ENCODE measurements at regions of chr20 and their contacts with region 1.

Region 1: DNA sequence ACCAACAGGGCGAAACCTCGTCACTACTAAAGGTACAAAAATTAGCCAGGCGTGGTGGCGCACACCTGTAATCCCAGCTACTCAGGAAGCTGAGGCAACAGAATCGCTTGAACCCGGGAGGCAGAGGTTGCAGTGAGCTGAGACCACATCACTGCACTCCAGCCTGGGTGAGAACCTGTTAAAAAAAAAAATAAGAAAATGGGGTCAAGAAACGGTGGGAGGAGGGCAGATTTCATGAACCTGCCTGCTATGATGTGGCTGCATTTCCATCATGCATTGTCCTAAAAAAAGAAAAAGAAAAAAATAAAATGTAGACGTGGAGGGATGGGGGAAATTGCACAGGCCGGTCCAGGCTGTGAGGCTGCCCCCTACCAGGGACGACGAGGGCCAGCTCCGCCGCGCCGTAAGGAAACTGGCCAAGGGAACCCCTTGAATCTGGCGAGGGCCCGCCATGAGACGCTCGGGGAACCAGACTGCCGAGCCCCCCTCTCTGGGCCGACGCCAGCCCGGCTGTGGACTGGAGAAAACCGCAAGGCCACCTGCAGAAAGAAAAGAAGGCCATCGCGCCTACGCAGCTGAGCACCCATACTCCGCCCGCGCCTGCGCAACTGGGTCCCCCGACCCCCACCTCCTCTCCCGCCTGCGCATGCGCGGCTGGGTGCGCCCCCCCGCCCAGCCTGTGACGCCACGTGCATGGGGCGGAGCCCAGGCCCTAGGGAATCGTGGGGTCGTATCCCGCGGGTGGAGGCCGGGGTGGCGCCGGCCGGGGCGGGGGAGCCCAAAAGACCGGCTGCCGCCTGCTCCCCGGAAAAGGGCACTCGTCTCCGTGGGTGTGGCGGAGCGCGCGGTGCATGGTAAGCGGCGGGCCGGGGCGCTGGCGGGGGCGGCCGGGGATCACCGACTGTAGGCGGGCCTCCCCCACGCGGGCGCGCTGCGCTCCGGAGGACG is at the start of gene ENTPD6:
- DNase-seq: peak; percentile 89 to 98 (median 93)
- H3K4me3 ChIP-seq: peak within 1 kb of the TSS; percentile 82 to 85
- H3K4me3 Mint-ChIP-seq: peak within 1 kb of the TSS; percentile 85 to 95 (median 90)
- H3K27ac ChIP-seq: peak within 1 kb of the TSS; percentile 77
- H3K27ac Mint-ChIP-seq: peak within 1 kb of the TSS; percentile 84 to 95 (median 93)
- H3K4me1 ChIP-seq: peaks cover 28% of the 10 kb centered on the region
- H3K4me1 Mint-ChIP-seq: peaks cover 33 to 46% (median 38%) of the 10 kb centered on the region in 4 donors
- H3K27me3 ChIP-seq: no peaks in the 10 kb centered on the region
- H3K27me3 Mint-ChIP-seq: no peaks in the 10 kb centered on the region
- total RNA-seq, gene ENTPD6: 90.2 to 94.3 TPM

Region 2: GRCh38 chr20:23420943-23421931 is 1774.1 kb before region 1 on chr20 and contains the start of gene NAPB:
- CTCF ChIA-PET with region 1: no interaction called
- POLR2A ChIA-PET with region 1: no interaction called
- intact Hi-C with region 1: loop called (anchors 5 kb)
- DNase-seq: peak; percentile 90 to 92 (median 91)
- H3K4me3 ChIP-seq: peak within 1 kb of the TSS; percentile 73 to 84
- H3K4me3 Mint-ChIP-seq: peak within 1 kb of the TSS; percentile 83 to 91 (median 87)
- H3K27ac ChIP-seq: peak within 1 kb of the TSS; percentile 72
- H3K27ac Mint-ChIP-seq: peak within 1 kb of the TSS; percentile 84 to 91 (median 89)
- H3K4me1 ChIP-seq: peaks cover 21% of the 10 kb centered on the region
- H3K4me1 Mint-ChIP-seq: peaks cover 16 to 32% (median 26%) of the 10 kb centered on the region in 4 donors
- H3K27me3 ChIP-seq: no peaks in the 10 kb centered on the region
- H3K27me3 Mint-ChIP-seq: peaks cover 5 to 10% of the 10 kb centered on the region in 2 donors
- total RNA-seq, gene NAPB: 13.3 to 14.9 TPM

Region 3: GRCh38 chr20:24027229-24027628 is 1168.1 kb before region 1 on chr20:
- CTCF ChIA-PET with region 1: no interaction called
- POLR2A ChIA-PET with region 1: interaction called, 5 read pairs
- intact Hi-C with region 1: loop called (anchors 5 kb)
- DNase-seq: peak; percentile 79 to 85 (median 83)
- H3K4me3 ChIP-seq: peak overlapping the region in 1 of 2 donors; percentile 34
- H3K4me3 Mint-ChIP-seq: peak overlapping the region; percentile 61 to 85 (median 68)
- H3K27ac ChIP-seq: peak overlapping the region; percentile 45
- H3K27ac Mint-ChIP-seq: peak overlapping the region; percentile 88 to 96 (median 95)
- H3K4me1 ChIP-seq: peaks cover 34% of the 10 kb centered on the region
- H3K4me1 Mint-ChIP-seq: peaks cover 20 to 53% (median 31%) of the 10 kb centered on the region in 4 donors
- H3K27me3 ChIP-seq: no peaks in the 10 kb centered on the region
- H3K27me3 Mint-ChIP-seq: no peaks in the 10 kb centered on the region

Region 4: DNA sequence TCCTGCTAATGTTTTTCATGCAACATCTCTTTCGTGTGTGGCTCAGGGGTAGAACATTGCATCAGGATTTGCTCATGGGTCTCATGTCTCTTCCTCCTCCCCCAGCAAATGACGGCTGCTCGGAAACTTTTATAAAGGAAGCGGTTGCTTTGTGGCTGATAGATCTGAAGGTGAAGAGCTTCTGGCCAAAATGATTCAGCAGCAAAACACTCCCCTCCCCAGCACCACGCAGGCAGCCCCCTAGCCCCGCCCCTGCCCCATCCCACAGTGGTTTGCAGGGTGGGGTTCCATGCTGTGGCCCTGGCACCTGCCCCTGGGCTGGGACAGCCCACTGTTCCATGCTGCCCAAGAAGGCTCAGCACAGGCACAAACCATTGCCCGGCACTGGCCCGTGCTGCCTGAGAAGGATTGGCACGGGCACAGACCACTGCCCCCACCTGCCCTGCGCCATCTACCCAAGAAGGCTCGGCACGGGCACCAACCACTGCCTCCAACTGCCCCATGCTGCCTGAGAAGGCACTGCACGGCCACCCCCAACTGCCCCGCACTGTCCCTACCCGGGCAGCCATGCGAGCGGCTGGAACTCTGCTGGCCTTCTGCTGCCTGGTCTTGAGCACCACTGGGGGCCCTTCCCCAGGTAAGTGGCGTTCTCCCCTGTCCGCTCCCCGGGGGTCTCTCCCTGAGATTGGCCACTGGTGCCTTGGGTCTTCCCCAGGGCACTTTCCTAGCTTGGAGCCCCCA is 246.2 kb before region 1 on chr20 and contains the start of gene CST7:
- CTCF ChIA-PET with region 1: no interaction called
- POLR2A ChIA-PET with region 1: interaction called, 3 read pairs
- intact Hi-C with region 1: loop called (anchors 1 kb)
- DNase-seq: peak; percentile 85 to 94 (median 87)
- H3K4me3 ChIP-seq: peak within 1 kb of the TSS in 1 of 2 donors; percentile 41
- H3K4me3 Mint-ChIP-seq: peak within 1 kb of the TSS; percentile 65 to 91 (median 84)
- H3K27ac ChIP-seq: peak within 1 kb of the TSS; percentile 65
- H3K27ac Mint-ChIP-seq: peak within 1 kb of the TSS; percentile 81 to 99 (median 96)
- H3K4me1 ChIP-seq: peaks cover 36% of the 10 kb centered on the region
- H3K4me1 Mint-ChIP-seq: peaks cover 32 to 80% (median 57%) of the 10 kb centered on the region in 4 donors
- H3K27me3 ChIP-seq: no peaks in the 10 kb centered on the region
- H3K27me3 Mint-ChIP-seq: no peaks in the 10 kb centered on the region
- total RNA-seq, gene CST7: 23.2 to 23.3 TPM

Region 5: GRCh38 chr20:25090492-25091429 is 104.5 kb before region 1 on chr20:
- CTCF ChIA-PET with region 1: interaction called, 4 read pairs
- POLR2A ChIA-PET with region 1: interaction called, 31 read pairs
- intact Hi-C with region 1: no loop called
- DNase-seq: peak; percentile 80 to 87 (median 82)
- H3K4me3 ChIP-seq: peak overlapping the region in 1 of 2 donors; percentile 23
- H3K4me3 Mint-ChIP-seq: peak overlapping the region in 7 of 8 donors; percentile 40 to 87 (median 71)
- H3K27ac ChIP-seq: peak overlapping the region; percentile 30
- H3K27ac Mint-ChIP-seq: peak overlapping the region; percentile 60 to 92 (median 87)
- H3K4me1 ChIP-seq: peaks cover 37% of the 10 kb centered on the region
- H3K4me1 Mint-ChIP-seq: peaks cover 31 to 38% (median 35%) of the 10 kb centered on the region in 4 donors
- H3K27me3 ChIP-seq: peaks cover 3% of the 10 kb centered on the region
- H3K27me3 Mint-ChIP-seq: peaks cover under 1 to 5% of the 10 kb centered on the region in 2 donors

Region 6: DNA sequence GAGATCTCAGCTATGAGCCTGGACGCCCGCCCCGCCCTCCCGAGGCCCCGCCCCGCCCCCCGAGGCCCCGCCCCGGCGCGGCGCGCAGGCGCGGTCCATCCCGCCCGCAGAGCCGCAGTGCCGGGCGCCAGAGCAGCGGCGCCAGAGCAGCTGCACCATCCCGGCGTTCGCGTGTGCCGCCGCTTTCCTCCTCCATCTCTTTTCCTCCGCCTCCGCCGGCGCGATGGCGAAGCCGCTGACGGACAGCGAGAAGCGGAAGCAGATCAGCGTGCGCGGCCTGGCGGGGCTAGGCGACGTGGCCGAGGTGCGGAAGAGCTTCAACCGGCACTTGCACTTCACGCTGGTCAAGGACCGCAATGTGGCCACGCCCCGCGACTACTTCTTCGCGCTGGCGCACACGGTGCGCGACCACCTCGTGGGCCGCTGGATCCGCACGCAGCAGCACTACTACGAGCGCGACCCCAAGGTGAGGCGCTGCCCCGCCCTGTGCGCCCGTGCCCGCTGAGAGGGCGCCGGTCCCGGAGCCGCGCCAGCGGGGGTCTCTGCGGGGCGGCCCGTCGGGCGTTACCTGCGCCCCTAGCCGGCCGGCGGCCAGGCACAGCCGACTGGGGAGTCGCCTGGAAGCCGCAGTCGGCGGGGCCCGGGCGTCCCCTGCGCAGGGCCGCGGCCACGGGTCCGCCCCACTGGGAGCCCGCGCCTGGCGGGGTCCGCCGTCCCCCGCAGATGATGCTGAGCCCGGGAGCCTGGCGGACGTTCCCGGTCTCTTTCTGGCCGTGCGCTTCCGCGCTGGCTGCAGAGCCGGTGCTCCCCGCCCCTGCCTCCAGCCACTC is 52.9 kb after region 1 on chr20 and contains the start of gene PYGB:
- CTCF ChIA-PET with region 1: interaction called, 4 read pairs
- POLR2A ChIA-PET with region 1: interaction called, 34 read pairs
- intact Hi-C with region 1: loop called (anchors 1 kb)
- DNase-seq: peak; percentile 63 to 80 (median 72)
- H3K4me3 ChIP-seq: peak within 1 kb of the TSS; percentile 65 to 94
- H3K4me3 Mint-ChIP-seq: peak within 1 kb of the TSS; percentile 94 to 97 (median 95)
- H3K27ac ChIP-seq: peak within 1 kb of the TSS; percentile 59
- H3K27ac Mint-ChIP-seq: peak within 1 kb of the TSS; percentile 69 to 94 (median 92)
- H3K4me1 ChIP-seq: peaks cover 30% of the 10 kb centered on the region
- H3K4me1 Mint-ChIP-seq: peaks cover 25 to 55% (median 38%) of the 10 kb centered on the region in 4 donors
- H3K27me3 ChIP-seq: no peaks in the 10 kb centered on the region
- H3K27me3 Mint-ChIP-seq: peaks cover 0 to 2% of the 10 kb centered on the region in 2 donors
- total RNA-seq, gene PYGB: 34.0 to 35.6 TPM

Region 7: DNA sequence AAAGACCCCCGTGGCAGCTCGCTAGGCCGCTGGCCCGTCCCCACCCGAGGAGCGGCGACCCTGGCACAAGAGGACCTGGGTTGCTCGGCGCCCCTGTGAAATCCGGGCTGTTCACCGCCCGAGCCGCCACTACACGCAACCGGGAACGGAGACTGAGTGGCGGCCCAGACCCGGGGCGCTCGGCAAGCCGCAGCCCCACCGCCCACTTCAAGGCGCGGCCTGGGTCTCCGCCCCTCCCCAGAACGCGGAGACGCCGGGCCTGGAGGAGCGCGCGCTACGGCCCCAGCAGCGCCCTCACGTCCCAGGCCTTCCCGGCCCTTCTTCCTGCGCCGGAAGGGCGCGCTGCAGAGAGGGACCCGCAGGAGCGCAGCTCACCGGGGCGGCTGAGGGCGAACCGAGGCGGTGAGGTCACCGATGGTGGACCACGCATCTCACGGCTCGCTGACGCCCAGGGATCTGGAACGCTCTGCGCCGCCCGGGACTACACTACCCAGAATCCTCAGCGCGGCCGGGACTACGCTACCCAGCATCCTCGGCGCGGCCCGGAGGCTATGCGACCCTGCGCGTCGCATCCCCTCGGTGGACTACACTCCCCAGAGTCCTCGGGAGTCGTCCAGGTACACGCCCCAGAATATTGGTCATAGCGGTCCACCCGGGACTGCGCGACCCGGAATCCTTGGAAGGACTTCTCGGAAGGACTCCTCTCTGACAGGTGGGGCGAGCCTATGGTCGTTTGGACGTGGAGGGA is 501.3 kb after region 1 on chr20 and contains the start of gene ZNF337:
- CTCF ChIA-PET with region 1: no interaction called
- POLR2A ChIA-PET with region 1: no interaction called
- intact Hi-C with region 1: loop called (anchors 5 kb)
- DNase-seq: peak; percentile 88 to 92 (median 90)
- H3K4me3 ChIP-seq: peak within 1 kb of the TSS; percentile 63 to 79
- H3K4me3 Mint-ChIP-seq: peak within 1 kb of the TSS; percentile 92 to 99 (median 96)
- H3K27ac ChIP-seq: peak within 1 kb of the TSS; percentile 71
- H3K27ac Mint-ChIP-seq: peak within 1 kb of the TSS; percentile 93 to 97 (median 94)
- H3K4me1 ChIP-seq: peaks cover 19% of the 10 kb centered on the region
- H3K4me1 Mint-ChIP-seq: peaks cover 27 to 48% (median 35%) of the 10 kb centered on the region in 4 donors
- H3K27me3 ChIP-seq: no peaks in the 10 kb centered on the region
- H3K27me3 Mint-ChIP-seq: no peaks in the 10 kb centered on the region
- total RNA-seq, gene ZNF337: 34.8 to 36.6 TPM